Heart right ventricle (tissue), 16 donors: ENCODE measurements at regions of chr9 and their contacts with region 1.

Region 1: DNA sequence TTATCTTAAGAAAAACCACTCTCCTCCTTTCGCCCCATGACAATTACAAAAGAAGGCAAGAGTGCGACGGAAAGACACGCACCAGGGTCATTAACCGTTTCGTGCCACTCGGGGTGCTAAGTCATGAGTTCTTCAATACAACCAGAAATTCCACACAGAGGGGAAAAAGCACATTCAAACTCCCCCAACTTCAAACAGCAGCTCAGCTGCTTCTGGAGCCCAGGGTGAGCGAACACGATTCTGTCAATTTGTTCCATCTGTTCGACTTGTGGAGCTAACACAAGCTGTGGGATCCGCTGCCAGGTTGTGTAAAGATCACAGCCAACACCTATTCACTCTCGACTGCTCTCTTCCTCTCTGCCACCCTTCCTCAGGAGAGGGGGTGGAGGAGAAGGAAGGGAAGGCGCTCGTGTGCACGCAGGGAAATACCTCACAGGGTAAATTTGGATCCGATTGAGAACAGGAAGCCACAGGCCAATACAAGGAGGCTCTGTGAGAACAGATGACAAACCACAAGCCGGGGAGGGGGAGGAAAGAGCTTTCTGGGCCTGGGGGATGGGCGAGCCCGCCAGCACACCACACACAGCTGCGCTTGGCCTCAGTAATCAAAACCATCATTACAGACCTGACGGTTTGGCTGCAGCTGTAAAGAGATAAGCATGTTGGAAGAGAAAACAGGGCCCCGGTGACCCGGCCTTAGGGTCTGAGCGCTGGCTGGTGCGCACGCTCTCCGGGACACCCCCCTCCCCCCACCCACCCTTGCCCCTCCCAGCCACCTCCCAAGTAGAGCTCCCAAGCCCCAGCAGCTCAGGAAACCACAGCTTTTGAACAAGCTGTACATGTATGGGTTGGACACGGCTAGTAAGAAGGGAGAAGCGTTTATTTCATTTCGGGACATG is 54.3 kb downstream of the PTCH1 start:
- DNase-seq: peak; percentile 54 to 79
- ATAC-seq: peak; percentile 86 to 96 (median 95)
- H3K4me3 ChIP-seq: peak overlapping the region in 9 of 10 donors; percentile 15 to 51 (median 43)
- H3K27ac ChIP-seq: peak overlapping the region in 9 of 10 donors; percentile 8 to 75 (median 62)
- H3K4me1 ChIP-seq: peaks cover 11 to 21% (median 19%) of the 10 kb centered on the region in 9 donors
- H3K27me3 ChIP-seq: peaks cover 0 to 5% (median 0%) of the 10 kb centered on the region in 7 donors
- CTCF ChIP-seq: no peak

Region 2: DNA sequence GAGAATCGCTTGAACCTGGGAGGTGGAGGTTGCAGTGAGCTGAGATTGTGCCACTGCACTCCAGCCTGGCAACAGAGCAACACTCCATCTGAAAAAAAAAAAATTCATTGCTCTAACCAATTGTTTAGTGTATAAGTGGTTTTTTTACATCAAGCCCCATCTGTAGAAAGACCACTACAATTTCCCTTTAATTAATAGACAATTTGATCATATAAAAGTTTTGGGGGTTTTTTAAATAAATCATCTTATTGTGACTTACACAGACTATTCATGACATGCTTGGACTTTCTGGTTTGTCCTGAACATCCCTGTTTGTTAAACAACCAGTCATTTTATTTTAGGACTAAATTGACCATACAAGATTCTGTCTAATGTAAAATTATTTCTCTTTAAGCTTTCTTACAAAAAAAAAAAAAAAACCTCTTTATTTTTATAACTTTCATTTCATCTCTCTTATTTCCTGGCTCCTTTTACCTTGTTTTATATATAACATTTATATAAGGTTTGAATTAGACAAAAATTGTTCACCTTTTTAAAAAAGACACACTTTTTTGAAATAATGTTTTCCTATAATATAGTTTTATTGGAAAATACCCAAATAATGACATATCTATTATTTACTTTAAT is 135.1 kb before region 1 on chr9:
- intact Hi-C with region 1: loop called in 1 of 10 experiments (anchors 10 kb)
- DNase-seq: no peak
- ATAC-seq: no peak
- H3K4me3 ChIP-seq: no peak overlapping the region
- H3K27ac ChIP-seq: no peak overlapping the region
- H3K4me1 ChIP-seq: no peaks in the 10 kb centered on the region
- H3K27me3 ChIP-seq: peaks cover 0 to 5% (median 0%) of the 10 kb centered on the region in 7 donors
- CTCF ChIP-seq: no peak

Region 3: GRCh38 chr9:95504053-95504963 is 41.8 kb after region 1 on chr9:
- intact Hi-C with region 1: loop called in 3 of 10 experiments (anchors 2 to 5 kb)
- DNase-seq: peak in 1 of 2 donors; percentile 25
- ATAC-seq: peak in 4 of 8 donors; percentile 26 to 43 (median 32)
- H3K4me3 ChIP-seq: peak overlapping the region in 2 of 10 donors; percentile 69 to 81
- H3K27ac ChIP-seq: peak overlapping the region in 1 of 10 donors; percentile 16
- H3K4me1 ChIP-seq: peaks cover 0 to 48% (median 28%) of the 10 kb centered on the region in 9 donors
- H3K27me3 ChIP-seq: peaks cover 0 to 49% (median 0%) of the 10 kb centered on the region in 7 donors
- CTCF ChIP-seq: no peak

Region 4: DNA sequence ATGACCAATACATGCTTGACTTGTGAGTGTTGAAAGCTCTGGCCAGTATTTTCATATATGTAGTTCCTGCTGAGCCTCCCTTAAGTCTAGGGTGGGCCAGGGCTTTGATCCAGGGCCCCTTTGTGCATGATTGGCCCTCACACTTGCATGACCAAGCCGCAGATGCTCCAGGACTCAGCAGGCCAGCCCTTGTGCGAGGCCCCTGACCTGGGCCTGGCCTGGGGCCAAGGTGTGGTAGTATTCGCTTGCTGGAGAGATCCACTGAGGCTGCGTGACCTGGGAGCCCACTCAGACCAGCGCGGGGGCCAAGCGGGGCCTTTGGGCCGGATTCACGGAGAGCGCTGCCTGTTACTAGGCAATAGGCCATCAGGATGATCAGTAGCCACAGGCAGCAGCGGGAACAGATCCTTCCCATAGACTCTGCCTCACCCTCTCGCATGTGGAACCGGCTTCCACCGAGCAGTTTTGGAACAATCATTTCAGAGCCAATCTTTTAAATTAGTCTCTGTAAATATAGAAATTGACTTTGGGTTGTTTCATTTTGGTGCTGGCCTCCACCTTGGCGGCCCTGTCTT is 133.3 kb after region 1 on chr9:
- intact Hi-C with region 1: no loop called
- DNase-seq: no peak
- ATAC-seq: no peak
- H3K4me3 ChIP-seq: no peak overlapping the region
- H3K27ac ChIP-seq: no peak overlapping the region
- H3K4me1 ChIP-seq: no peaks in the 10 kb centered on the region
- H3K27me3 ChIP-seq: no peaks in the 10 kb centered on the region
- CTCF ChIP-seq: no peak